Endothelial cell of umbilical vein (primary cell): ENCODE measurements at regions of chr12 and their contacts with region 1.

Region 1: DNA sequence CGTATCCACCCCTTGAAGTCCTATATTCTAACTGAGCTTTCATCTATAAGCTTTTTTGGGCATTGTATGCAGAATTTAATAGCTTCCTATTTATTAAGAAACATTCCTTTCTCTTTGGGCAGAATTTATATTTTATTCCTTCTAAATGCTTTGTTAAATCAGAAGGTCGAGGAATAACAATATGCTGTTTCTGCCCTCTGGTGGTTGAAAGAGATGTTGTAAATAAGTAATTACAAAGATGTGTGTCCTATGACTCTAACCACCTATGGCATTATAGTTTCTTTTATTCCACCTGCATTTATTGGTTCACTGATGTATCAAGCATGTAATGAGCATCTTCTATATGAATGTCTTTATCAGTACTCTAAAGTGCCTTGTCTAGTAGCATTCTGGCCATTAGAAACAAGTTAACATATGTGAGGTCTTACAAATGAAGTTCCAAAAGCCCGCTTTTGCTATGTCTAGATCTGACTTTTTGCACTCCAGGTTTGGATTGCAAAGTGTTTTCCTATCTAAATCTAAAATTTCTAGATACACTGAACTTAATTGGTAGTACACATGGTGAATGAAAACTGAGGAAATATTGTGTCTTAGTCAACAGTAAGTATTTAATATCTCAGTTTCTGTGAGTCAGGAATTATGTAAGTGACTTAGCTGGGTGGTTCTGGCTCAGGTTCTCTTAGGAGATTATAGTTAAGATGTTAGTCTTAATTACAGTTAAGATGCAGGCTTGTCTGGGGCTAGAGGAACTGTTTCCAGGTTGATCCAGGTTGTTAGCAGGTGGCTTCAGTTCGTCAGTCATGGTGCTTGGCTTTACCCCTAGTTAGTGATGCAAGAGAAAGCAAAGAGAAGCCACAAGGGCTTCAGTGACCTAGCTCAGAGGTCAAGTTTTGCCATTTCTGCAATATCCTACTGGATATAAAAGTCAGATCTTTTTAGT is 57.5 kb downstream of the PLEKHA5 start:
- DNase-seq: peak; percentile 71
- H3K4me3 ChIP-seq: no peak overlapping the region
- H3K27ac ChIP-seq: no peak overlapping the region
- H3K4me1 ChIP-seq: peaks cover 9% of the 10 kb centered on the region
- H3K27me3 ChIP-seq: no peaks in the 10 kb centered on the region
- CTCF ChIP-seq: peak; percentile 18 to 32
- POLR2A ChIP-seq: no peak

Region 2: GRCh38 chr12:18430425-18431048 is 756.5 kb before region 1 on chr12:
- CTCF ChIA-PET with region 1: interaction called, 45 read pairs
- POLR2A ChIA-PET with region 1: no interaction called
- dilution Hi-C with region 1: no loop called
- intact Hi-C with region 1: loop called (anchors 1 kb)
- DNase-seq: peak; percentile 62
- H3K4me3 ChIP-seq: no peak overlapping the region
- H3K27ac ChIP-seq: no peak overlapping the region
- H3K4me1 ChIP-seq: no peaks in the 10 kb centered on the region
- H3K27me3 ChIP-seq: no peaks in the 10 kb centered on the region
- CTCF ChIP-seq: peak; percentile 69 to 77
- POLR2A ChIP-seq: no peak

Region 3: GRCh38 chr12:19129486-19130223 is 57.3 kb before region 1 on chr12 and contains the start of gene PLEKHA5:
- CTCF ChIA-PET with region 1: interaction called, 12 read pairs
- POLR2A ChIA-PET with region 1: no interaction called
- dilution Hi-C with region 1: no loop called
- intact Hi-C with region 1: no loop called
- DNase-seq: peak; percentile 31
- H3K4me3 ChIP-seq: peak within 1 kb of the TSS; percentile 62 to 100 (median 69)
- H3K27ac ChIP-seq: peak within 1 kb of the TSS; percentile 34
- H3K4me1 ChIP-seq: peaks cover 8% of the 10 kb centered on the region
- H3K27me3 ChIP-seq: no peaks in the 10 kb centered on the region
- CTCF ChIP-seq: no peak
- POLR2A ChIP-seq: peak; percentile 16
- total RNA-seq, gene PLEKHA5: 12.7 and 13.4 TPM in 2 replicates

Region 4: GRCh38 chr12:19273482-19274330 is 86.7 kb after region 1 on chr12:
- CTCF ChIA-PET with region 1: interaction called, 9 read pairs
- POLR2A ChIA-PET with region 1: no interaction called
- dilution Hi-C with region 1: no loop called
- intact Hi-C with region 1: loop called (anchors 2 kb)
- DNase-seq: peak; percentile 96
- H3K4me3 ChIP-seq: no peak overlapping the region
- H3K27ac ChIP-seq: peak overlapping the region; percentile 71
- H3K4me1 ChIP-seq: peaks cover 19% of the 10 kb centered on the region
- H3K27me3 ChIP-seq: no peaks in the 10 kb centered on the region
- CTCF ChIP-seq: no peak
- POLR2A ChIP-seq: no peak